Heart left ventricle (tissue), 16 donors: ENCODE measurements at regions of chr17 and their contacts with region 1.

Region 1: GRCh38 chr17:6421700-6422604 is 13.0 kb downstream of the AIPL1 start:
- DNase-seq: peak; percentile 77 to 84 (median 81)
- ATAC-seq: peak; percentile 55 to 89 (median 82)
- H3K4me3 ChIP-seq: no peak overlapping the region
- H3K27ac ChIP-seq: no peak overlapping the region
- H3K4me1 ChIP-seq: peaks cover 0 to 1% (median 0%) of the 10 kb centered on the region in 12 donors
- H3K27me3 ChIP-seq: peaks cover 0 to 18% (median 0%) of the 10 kb centered on the region in 9 donors
- CTCF ChIP-seq: peak; percentile 61 to 89 (median 84)
- POLR2A ChIP-seq: no peak

Region 2: GRCh38 chr17:5584383-5585286 is 837.3 kb before region 1 on chr17 and contains the start of gene NLRP1:
- intact Hi-C with region 1: loop called (anchors 1 to 2 kb)
- DNase-seq: peak; percentile 89 to 93 (median 91)
- ATAC-seq: peak; percentile 92 to 96 (median 94)
- H3K4me3 ChIP-seq: peak within 1 kb of the TSS; percentile 14 to 79 (median 61)
- H3K27ac ChIP-seq: peak within 1 kb of the TSS; percentile 78 to 95 (median 85)
- H3K4me1 ChIP-seq: peaks cover 4 to 64% (median 31%) of the 10 kb centered on the region in 12 donors
- H3K27me3 ChIP-seq: peaks cover 0 to 4% (median 0%) of the 10 kb centered on the region in 9 donors
- CTCF ChIP-seq: no peak
- POLR2A ChIP-seq: peak in 1 of 2 donors; percentile 68
- total RNA-seq, gene NLRP1: 3.8 to 16.7 (median 8.8) TPM

Region 3: DNA sequence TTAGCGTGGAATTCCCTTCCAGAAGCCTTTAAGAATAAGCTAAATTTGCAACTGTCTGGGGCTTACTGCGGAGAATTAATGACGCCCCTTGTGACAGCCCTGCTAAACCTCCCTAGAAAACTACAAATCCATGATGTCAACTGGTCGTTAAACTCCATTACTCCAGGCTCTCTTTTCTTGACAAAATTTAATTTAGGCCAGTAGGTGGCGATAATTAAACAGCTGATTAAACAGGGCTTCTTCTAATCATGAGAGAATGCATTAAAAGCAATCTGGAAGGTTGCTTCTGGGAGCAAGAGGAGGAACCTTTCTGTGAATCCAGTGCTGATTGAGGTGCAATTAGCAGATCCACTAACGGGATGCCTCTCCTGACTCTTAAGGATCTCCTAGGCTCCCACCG is 829.6 kb before region 1 on chr17:
- intact Hi-C with region 1: loop called (anchors 1 to 2 kb)
- DNase-seq: no peak
- ATAC-seq: no peak
- H3K4me3 ChIP-seq: no peak overlapping the region
- H3K27ac ChIP-seq: no peak overlapping the region
- H3K4me1 ChIP-seq: peaks cover 0 to 2% (median 0%) of the 10 kb centered on the region in 12 donors
- H3K27me3 ChIP-seq: peaks cover 0 to 33% (median 6%) of the 10 kb centered on the region in 9 donors
- CTCF ChIP-seq: peak; percentile 30 to 68 (median 54)
- POLR2A ChIP-seq: no peak

Region 4: GRCh38 chr17:5706577-5707216 is 715.3 kb before region 1 on chr17:
- intact Hi-C with region 1: loop called in 2 of 10 experiments (anchors 5 to 10 kb)
- DNase-seq: peak in 3 of 5 donors; percentile 20 to 42 (median 41)
- ATAC-seq: peak in 1 of 4 donors; percentile 47
- H3K4me3 ChIP-seq: no peak overlapping the region
- H3K27ac ChIP-seq: no peak overlapping the region
- H3K4me1 ChIP-seq: no peaks in the 10 kb centered on the region
- H3K27me3 ChIP-seq: peaks cover 0 to 24% (median 5%) of the 10 kb centered on the region in 9 donors
- CTCF ChIP-seq: peak; percentile 31 to 66 (median 52)
- POLR2A ChIP-seq: no peak

Region 5: DNA sequence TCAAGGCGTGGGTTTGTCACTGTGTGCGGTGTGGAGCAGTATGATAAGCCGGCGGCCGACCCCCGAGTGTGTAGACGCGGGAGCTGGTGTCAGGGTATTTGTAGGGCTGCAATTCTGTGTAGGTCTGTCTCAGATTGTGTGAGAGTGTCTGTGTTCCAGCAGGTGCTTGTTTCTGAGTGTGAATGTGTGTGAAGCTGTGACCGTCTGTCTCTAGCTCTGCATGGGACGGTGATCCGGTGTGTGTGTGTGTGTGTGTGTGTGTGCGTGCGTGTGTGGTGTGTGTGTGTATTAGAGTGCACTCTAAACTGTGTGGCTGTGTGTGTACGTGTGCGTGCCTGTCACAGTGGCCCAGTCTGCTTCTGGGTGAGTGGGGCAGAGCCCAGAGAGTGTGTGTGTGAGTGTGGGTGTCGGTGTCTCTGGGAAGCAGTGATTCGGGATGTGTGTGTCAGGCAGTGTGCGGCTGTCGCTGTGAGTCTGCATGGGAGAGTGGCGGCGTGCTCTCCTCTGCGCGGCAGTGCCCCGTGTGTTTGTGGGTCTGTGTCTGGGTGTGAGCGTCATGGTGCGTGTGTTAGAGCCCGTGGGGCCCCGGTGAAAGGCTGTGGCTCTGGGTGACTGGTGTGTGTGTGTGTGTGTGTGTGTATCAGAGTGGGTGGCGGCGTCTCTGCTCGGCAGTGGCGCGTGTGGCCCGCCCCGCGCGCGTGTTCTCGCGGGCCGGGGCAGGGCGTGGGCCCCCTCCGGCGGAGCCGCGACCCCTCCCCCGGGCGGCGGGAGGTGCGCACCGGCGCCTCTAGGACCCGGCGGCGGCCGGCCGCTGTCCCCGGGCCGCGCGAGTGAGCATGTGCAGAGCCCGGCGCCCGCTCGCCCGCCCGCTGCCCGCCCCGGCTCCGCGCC is 352.2 kb before region 1 on chr17 and contains the start of gene WSCD1:
- intact Hi-C with region 1: loop called in 2 of 10 experiments (anchors 5 to 10 kb)
- DNase-seq: peak in 1 of 5 donors; percentile 39
- ATAC-seq: peak; percentile 20 to 74 (median 64)
- H3K4me3 ChIP-seq: peak within 1 kb of the TSS; percentile 42 to 88 (median 64)
- H3K27ac ChIP-seq: peak within 1 kb of the TSS in 4 of 12 donors; percentile 10 to 67 (median 49)
- H3K4me1 ChIP-seq: peaks cover 0 to 20% (median 0%) of the 10 kb centered on the region in 12 donors
- H3K27me3 ChIP-seq: peaks cover 0 to 41% (median 3%) of the 10 kb centered on the region in 9 donors
- CTCF ChIP-seq: no peak
- POLR2A ChIP-seq: no peak
- total RNA-seq, gene WSCD1: 3.6 to 12.4 (median 5.3) TPM

Region 6: DNA sequence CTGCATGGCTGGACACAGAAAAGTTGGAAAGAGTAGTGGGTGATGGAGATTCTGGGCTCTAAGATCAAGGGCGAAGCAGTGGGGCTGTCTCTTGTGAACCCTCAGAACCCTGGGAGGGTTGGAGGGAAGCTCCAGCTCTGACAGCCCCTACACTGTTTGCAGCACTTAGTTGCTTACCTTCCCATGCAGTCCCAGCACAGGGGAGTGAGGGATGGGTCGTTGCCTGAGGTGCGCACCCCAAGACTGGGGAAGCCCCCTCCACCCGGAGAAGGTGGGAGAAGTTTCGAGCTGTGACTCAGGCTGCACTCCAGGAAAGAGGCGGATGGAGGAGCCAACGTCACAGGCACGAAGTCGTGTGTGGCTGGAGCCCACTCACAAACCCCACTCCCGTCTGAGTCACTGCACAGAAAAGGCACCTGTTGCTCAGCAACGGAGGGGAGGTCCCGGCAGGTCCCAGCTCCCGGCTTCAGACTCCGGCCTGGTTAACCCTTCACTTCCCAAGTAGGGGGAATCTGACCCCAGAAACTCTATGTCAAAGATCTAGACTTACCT is 47.1 kb before region 1 on chr17:
- intact Hi-C with region 1: no loop called
- DNase-seq: no peak
- ATAC-seq: peak in 1 of 4 donors; percentile 90
- H3K4me3 ChIP-seq: no peak overlapping the region
- H3K27ac ChIP-seq: no peak overlapping the region
- H3K4me1 ChIP-seq: peaks cover 0 to 3% (median 0%) of the 10 kb centered on the region in 12 donors
- H3K27me3 ChIP-seq: peaks cover 0 to 21% (median 0%) of the 10 kb centered on the region in 9 donors
- CTCF ChIP-seq: no peak
- POLR2A ChIP-seq: no peak

Region 7: GRCh38 chr17:6712058-6712853 is 290.3 kb after region 1 on chr17:
- intact Hi-C with region 1: no loop called
- DNase-seq: no peak
- ATAC-seq: no peak
- H3K4me3 ChIP-seq: peak overlapping the region in 2 of 12 donors; percentile 44 to 45
- H3K27ac ChIP-seq: no peak overlapping the region
- H3K4me1 ChIP-seq: peaks cover 0 to 23% (median 9%) of the 10 kb centered on the region in 12 donors
- H3K27me3 ChIP-seq: peaks cover 15 to 66% (median 29%) of the 10 kb centered on the region in 9 donors
- CTCF ChIP-seq: no peak
- POLR2A ChIP-seq: no peak

Region 8: DNA sequence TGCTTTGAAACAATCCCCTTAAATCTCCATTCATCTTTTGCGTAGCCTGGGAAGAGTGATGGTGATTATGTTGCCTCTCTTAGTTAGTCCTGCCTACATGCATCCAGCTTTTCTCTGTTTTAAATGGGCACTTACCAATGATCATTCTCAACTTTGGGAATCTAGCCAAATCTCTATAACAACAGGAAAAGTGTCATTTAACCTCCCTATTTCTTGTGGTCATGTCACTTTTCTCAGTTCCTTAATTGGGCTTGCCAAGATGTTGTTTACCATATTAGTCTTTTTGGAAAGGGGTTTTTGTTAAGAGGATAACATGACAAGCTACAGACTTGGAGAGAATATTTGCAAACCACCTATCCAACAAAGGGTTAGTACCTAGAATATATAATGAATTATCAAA is 673.7 kb after region 1 on chr17:
- intact Hi-C with region 1: no loop called
- DNase-seq: no peak
- ATAC-seq: peak in 1 of 4 donors; percentile 45
- H3K4me3 ChIP-seq: no peak overlapping the region
- H3K27ac ChIP-seq: peak overlapping the region in 2 of 12 donors; percentile 26 to 86
- H3K4me1 ChIP-seq: peaks cover 0 to 52% (median 0%) of the 10 kb centered on the region in 12 donors
- H3K27me3 ChIP-seq: peaks cover 0 to 30% (median 0%) of the 10 kb centered on the region in 9 donors
- CTCF ChIP-seq: no peak
- POLR2A ChIP-seq: no peak